Activated naive CD4-positive, alpha-beta T cell treated with anti-CD3 and anti-CD28 coated beads for 36 hours (primary cell): ENCODE measurements at regions of chr10 and their contacts with region 1.

Region 1: GRCh38 chr10:49183596-49184542 is 4.3 kb downstream of the TMEM273 start:
- DNase-seq: peak; percentile 28
- H3K4me3 Mint-ChIP-seq: no peak overlapping the region
- H3K27ac Mint-ChIP-seq: no peak overlapping the region
- H3K4me1 Mint-ChIP-seq: peaks cover 19% of the 10 kb centered on the region
- H3K27me3 Mint-ChIP-seq: peaks cover 27% of the 10 kb centered on the region

Region 2: DNA sequence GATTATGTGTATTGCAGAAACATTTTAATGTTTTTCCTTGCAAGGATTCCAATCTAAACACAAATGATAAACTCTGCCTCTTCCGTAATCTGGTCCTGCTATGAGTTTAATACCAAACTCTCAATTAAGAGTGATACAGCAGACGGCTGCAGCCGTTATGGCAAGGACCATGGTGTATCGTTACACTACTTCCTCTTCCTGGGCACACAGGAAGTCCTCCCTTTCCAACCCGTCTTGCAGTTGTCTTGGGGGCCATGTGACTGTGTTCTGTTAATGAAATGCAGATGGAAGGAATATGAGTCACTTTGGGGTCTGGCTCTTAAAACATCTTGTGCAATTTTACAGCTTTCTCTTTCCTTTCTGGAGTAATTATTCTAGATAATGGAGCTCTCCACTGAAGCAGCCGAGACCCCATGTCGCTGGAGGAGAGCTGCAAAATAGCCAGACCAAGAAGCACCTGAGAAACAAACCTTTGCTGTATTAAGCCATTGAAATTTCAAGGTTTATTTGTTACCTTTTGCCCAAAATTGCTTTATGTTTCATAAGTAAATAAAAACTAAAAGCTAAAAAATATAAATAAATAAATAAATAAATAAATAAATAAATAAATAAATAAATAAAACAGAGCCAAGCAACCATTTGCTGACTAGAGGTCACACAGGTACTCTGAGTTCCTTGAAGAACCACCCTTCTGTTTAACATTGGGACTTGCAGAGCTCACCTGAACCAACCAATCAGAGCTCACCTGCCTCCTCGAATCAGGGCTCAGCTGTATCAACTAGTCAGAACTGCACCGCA is 984.1 kb before region 1 on chr10:
- CTCF ChIA-PET with region 1: no interaction called
- intact Hi-C with region 1: no loop called
- DNase-seq: no peak
- H3K4me3 Mint-ChIP-seq: no peak overlapping the region
- H3K27ac Mint-ChIP-seq: no peak overlapping the region
- H3K4me1 Mint-ChIP-seq: peaks cover 3% of the 10 kb centered on the region
- H3K27me3 Mint-ChIP-seq: no peaks in the 10 kb centered on the region

Region 3: GRCh38 chr10:48509974-48510692 is 673.7 kb before region 1 on chr10:
- CTCF ChIA-PET with region 1: no interaction called
- intact Hi-C with region 1: no loop called
- DNase-seq: peak; percentile 21
- H3K4me3 Mint-ChIP-seq: no peak overlapping the region
- H3K27ac Mint-ChIP-seq: no peak overlapping the region
- H3K4me1 Mint-ChIP-seq: no peaks in the 10 kb centered on the region
- H3K27me3 Mint-ChIP-seq: peaks cover 5% of the 10 kb centered on the region

Region 4: DNA sequence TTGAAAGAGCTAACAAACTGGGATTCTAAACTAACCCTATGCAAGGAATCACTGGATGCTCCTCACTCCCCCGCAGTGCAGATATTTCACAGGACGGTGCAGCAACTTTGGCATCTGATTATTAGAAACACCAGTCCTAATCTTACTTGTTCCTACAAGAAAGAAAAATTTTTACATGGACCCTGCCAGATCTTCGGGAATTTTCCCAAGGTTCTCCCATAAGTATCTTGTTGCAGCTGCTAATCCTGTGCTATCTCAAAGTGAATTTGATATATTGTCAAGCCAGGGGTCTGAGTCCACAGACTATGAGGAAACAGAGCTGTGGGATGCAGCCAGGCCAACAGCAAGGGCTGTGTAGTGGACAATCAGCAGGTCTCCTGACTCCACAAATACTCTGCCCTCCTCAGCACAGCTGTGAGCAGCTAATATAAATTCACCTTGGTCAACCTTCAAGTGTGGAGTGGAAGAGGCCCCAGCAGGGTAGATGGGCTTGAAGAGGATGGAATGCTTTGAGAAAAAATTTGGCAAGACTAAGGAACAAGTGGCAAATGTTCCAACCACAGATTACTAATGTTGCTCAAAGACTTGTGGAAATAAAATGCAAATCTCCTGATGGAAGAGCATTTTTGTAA is 94.2 kb before region 1 on chr10:
- CTCF ChIA-PET with region 1: no interaction called
- intact Hi-C with region 1: no loop called
- DNase-seq: no peak
- H3K4me3 Mint-ChIP-seq: no peak overlapping the region
- H3K27ac Mint-ChIP-seq: no peak overlapping the region
- H3K4me1 Mint-ChIP-seq: no peaks in the 10 kb centered on the region
- H3K27me3 Mint-ChIP-seq: peaks cover 5% of the 10 kb centered on the region

Region 5: DNA sequence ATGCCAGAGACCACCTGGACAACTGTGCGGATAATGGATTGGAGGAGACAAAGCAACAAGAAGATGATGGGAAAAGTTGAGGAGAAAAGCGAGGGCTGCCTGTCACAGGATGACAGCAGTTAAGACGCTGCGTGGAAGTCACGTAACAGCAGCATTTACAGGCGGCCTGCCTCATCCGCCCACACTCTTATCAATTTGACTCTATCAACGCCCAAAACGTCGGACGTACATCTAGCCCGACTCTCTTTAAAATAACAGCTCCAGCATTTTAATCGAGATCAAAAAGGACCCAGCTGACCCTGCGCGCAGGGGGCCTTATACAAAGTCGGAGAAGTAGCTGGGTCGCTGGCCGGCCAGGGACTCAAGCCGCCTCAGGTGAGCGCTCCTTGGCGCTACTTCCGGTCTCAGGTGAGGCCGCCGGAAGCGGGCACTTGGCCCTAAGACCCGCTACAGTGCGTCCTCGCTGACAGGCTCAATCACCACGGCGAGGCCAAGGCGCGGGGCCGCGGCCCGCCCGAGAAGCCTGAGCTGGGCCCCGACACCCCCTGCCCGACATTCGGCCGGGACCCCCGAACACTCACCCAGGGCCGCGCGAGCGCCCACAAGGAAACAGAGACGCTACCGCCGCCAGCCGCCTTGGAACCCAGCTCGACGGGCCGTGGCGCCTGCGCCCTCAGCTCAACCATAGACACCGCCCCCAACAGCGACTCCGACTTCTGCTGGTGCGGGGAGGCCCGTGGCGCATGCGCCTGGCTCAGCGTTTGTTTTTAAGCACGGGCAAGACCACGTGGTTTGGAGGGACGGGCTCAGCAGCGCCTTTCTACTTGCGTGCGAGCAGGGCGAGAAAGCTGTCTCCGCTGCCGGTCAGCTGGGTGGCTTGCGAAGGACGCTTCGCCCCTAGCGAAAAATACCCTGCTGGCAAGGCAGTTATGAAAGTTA is 354.8 kb after region 1 on chr10 and contains the start of gene ERCC6:
- CTCF ChIA-PET with region 1: no interaction called
- intact Hi-C with region 1: loop called (anchors 5 kb)
- DNase-seq: peak; percentile 97
- H3K4me3 Mint-ChIP-seq: peak within 1 kb of the TSS; percentile 90
- H3K27ac Mint-ChIP-seq: peak within 1 kb of the TSS; percentile 92
- H3K4me1 Mint-ChIP-seq: peaks cover 34% of the 10 kb centered on the region
- H3K27me3 Mint-ChIP-seq: peaks cover 14% of the 10 kb centered on the region
- total RNA-seq, gene ERCC6: 14.2 to 16.2 TPM